PC-9 (cell line): ENCODE measurements at regions of chr14 and their contacts with region 1.

Region 1: DNA sequence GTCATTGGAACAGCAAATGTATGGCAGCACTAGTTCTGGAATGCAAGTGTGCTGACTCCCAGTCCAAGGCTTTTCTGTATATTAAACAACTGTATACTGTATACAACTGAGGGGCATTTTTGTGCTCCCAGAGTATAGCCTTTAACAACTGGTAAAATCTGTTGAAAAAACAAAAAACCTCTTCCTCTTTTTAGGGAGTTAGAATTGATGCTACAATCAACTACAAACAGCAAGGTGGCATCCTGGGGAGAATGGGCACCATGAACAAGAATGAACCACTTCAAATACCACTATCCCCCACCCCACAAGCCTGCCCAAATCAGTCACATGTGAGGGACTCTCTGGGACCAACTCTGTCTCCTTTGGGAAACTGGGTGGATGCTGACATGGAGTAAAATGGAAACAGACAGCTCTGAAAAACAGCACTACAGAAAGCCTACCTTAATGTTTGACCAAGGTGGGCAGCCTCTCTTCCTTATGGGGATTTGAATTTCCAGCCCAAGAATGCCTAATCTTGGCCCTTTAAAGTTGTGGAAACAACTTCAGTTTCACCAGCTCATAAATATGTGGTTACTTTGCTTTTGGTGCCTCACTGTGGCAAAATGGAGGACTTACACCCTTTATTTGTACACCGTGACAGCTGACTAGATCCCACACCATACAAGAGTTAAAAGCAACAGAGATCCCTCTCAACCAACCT is 7.5 kb downstream of the VTI1B start:
- DNase-seq: peak; percentile 9 to 49
- H3K4me3 ChIP-seq: no peak overlapping the region
- H3K27ac ChIP-seq: no peak overlapping the region
- H3K4me1 ChIP-seq: no peaks in the 10 kb centered on the region
- H3K27me3 ChIP-seq: no peaks in the 10 kb centered on the region
- CTCF ChIP-seq: peak; percentile 85

Region 2: DNA sequence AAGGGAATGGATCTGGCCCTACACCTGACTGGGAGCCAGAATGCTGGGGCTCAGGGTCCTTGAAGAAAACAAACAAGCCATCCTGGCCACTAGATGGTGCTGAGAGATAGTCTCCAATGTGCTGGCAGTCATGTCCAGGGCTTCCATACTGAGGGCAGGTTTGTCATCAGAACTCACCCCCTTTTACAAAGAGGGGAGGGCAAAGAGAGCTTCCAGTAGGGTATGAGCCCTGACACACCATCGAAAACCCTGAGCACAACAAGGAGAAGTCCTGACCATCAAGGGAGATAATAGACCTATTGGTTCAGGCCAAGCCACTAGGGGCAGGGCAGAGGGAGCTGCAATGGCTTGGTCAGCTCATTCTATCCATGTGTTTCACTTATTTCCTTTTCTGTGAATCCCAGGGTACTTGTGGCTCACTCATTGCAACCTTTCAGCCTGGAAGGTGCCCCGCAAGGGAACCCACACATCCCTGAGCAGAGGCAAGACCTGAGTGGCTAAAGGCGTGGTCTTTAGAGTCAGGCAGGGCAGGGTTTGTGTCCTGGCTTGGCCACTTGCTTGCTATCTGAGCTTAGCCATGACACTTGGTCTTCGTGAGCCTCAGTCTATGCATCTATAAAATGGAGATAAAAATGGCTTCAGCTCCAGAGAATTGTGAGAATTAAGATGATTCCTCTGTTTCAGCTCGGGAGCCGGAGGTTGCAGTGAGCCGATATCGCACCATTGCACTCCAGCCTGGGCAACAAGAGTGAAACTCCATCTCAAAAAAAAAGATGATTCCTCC is 140.0 kb before region 1 on chr14:
- CTCF ChIA-PET with region 1: interaction called, 3 read pairs
- POLR2A ChIA-PET with region 1: no interaction called
- intact Hi-C with region 1: loop called (anchors 2 kb)
- DNase-seq: peak; percentile 43 to 47
- H3K4me3 ChIP-seq: no peak overlapping the region
- H3K27ac ChIP-seq: no peak overlapping the region
- H3K4me1 ChIP-seq: no peaks in the 10 kb centered on the region
- H3K27me3 ChIP-seq: peaks cover 17% of the 10 kb centered on the region; the same call in 1 of the 2 replicates
- CTCF ChIP-seq: peak; percentile 82

Region 3: DNA sequence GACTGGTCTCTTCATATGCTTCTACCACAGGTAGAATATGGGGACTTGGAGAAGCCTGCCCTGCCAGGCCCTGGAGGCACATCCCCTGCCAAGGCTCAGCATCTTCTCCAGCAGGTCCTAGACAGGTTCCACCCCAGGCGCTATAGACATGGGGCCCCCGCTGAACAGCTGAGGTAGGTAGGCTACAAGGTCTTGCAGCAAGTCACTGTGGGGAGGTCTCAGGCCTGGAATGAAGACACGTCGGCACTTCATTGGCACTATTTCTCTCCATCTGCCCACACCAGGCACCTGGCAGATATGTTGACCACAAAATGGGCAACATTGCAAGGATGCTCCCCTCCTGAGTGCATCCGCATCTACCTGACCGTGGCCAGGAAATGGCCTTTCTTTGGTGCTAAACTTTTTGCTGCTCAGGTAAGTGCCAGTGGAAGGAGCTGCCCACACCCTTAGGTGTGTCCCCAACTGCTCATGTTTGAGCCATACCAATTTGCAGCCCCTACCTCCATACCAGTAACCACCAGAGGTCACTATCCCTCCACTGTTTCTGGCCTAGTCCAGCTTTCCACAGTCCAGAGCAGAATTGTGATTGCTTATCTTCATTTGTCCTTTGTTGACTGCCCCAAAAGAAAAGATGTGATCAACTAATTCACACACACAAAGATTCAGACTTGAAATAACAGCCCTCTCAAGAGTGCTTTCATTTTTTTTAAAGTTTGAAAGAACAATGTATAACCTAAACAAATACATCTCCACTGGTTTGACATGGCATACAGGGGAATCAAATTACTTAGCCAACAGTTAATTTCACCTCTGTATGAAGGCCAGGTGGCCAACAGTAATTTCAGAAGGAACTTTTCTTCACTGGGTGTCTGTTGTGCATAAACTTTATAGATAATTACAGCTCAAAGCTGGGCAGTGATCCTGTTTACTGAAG is 82.9 kb before region 1 on chr14:
- CTCF ChIA-PET with region 1: interaction called, 9 read pairs
- POLR2A ChIA-PET with region 1: interaction called, 7 read pairs
- intact Hi-C with region 1: loop called (anchors 1 kb)
- DNase-seq: peak; percentile 42 to 60
- H3K4me3 ChIP-seq: no peak overlapping the region
- H3K27ac ChIP-seq: no peak overlapping the region
- H3K4me1 ChIP-seq: no peaks in the 10 kb centered on the region
- H3K27me3 ChIP-seq: no peaks in the 10 kb centered on the region
- CTCF ChIP-seq: peak; percentile 85

Region 4: DNA sequence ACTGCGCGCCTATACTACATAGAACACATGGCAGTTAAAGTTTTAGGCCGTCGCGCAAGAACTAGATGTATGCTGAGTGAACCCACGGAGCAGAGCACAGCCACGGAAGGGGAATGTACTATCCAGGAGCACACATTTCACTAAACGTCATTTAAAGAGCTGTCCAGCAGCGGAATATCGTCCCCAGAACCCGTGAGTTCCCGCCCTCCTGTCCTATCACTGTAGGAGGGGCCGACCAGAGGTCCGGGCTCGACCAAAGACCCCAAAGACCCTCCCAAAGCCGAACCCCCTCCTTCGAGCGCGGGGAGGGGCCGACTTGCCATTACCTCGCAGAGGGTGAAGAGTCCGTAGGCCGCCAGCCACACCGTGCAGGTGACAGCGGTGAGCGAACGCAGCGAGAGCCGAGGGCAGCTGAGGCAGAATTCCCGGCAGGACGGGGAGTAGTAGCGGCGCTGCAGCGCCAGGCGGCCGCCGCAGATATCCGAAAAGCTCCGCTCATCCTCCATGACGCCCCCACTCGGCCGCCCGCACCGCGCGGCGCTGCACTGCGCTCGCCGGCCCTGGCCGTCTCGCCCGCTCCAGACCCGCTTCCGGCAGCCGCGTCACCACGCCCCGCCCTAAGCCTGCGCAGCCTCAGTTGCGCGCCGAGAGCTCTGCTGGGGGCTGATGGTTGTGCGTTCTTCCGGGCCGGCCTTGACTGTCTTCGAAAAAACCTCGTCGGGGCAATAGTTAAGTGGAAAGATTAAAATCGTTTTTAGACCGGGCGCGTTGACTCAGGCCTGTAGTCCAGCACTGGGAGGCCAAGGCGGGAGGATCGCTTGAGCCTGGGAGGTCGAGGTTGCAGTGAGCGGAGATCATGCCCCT is 67.0 kb before region 1 on chr14 and contains the start of gene PIGH:
- CTCF ChIA-PET with region 1: interaction called, 11 read pairs
- POLR2A ChIA-PET with region 1: no interaction called
- intact Hi-C with region 1: no loop called
- DNase-seq: peak; percentile 69 to 91
- H3K4me3 ChIP-seq: peak within 1 kb of the TSS; percentile 87
- H3K27ac ChIP-seq: peak within 1 kb of the TSS; percentile 55
- H3K4me1 ChIP-seq: peaks cover 18% of the 10 kb centered on the region
- H3K27me3 ChIP-seq: no peaks in the 10 kb centered on the region
- CTCF ChIP-seq: peak; percentile 63; the same call in 1 of the 2 replicates
- total RNA-seq, gene PIGH: 9.8 and 13.0 TPM in 2 replicates

Region 5: DNA sequence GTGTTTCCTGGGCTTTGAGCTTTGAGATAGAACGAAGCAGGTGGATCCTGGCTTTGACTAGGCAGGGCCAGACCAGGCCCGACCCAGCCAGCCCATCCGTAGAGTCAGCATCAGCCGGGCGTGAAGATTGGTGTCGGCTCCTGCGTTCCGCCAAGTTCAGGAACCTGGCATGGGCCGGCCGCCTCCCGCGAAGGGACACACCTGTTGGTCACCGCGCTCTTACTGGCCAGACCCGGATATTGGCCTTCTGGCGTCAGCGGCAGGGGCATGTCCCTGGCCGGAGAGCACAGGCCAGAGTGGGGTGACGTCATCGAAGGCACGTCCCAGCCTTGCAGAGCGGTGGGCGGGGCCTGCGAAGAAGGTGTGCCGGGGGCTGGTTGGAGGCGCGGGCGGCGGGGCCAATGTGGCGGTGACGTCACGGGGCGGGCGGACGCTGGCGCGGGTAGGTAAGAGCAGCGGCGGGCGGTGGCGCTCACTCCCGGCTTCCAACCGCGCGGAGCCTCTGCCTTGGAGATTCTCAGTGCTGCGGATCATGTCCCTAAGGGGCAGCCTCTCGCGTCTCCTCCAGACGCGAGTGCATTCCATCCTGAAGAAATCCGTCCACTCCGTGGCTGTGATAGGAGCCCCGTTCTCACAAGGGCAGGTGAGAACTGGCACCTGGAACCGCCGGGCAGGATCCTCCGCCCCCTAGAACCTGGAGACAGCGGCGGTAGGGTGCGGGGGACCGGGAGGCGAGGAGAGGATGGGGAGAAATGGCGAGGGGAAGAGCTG is 47.3 kb before region 1 on chr14 and contains the start of gene ARG2:
- CTCF ChIA-PET with region 1: interaction called, 16 read pairs
- POLR2A ChIA-PET with region 1: no interaction called
- intact Hi-C with region 1: loop called (anchors 2 kb)
- DNase-seq: peak; percentile 98 to 99
- H3K4me3 ChIP-seq: peak within 1 kb of the TSS; percentile 73
- H3K27ac ChIP-seq: peak within 1 kb of the TSS; percentile 36
- H3K4me1 ChIP-seq: peaks cover 27% of the 10 kb centered on the region
- H3K27me3 ChIP-seq: no peaks in the 10 kb centered on the region
- CTCF ChIP-seq: no peak
- total RNA-seq, gene ARG2: 8.6 and 10.2 TPM in 2 replicates